ENCODE measurements at regions of chr4 and their contacts with region 1.

Region 1: DNA sequence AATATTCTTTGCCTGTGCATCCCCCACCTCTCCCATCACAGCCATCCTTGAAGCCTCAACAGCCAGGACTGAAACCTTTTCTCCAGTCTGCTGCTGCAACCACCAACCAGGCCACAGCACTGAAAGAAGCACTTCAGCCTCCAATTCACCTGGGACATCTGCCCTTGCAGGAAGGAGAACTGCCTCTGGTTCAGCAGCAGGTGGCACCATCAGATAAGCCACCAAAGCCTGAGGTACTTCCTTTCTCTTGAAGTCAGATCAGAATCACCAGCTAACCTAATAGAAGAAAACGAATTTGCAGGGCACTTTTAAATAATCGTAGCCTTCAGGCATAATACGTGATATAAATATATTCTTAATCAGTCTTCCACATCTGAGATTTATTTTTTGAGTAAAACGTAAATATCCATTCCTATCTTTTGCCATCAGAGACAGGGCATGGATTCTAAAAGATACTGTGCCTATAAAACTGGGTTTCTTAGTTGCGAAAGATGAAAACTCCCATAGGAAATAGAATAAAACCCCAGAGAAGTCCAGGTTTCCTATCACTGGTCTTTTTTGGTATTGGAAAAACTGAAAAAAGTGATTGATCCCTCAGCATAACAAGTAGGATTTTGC is 9.5 kb downstream of the AMBN start:
- DNase-seq: peak; percentile 90
- H3K4me3 ChIP-seq: no peak overlapping the region
- H3K27ac ChIP-seq: no peak overlapping the region
- H3K4me1 ChIP-seq: peaks cover 7% of the 10 kb centered on the region
- CTCF ChIP-seq: peak; percentile 99

Region 2: DNA sequence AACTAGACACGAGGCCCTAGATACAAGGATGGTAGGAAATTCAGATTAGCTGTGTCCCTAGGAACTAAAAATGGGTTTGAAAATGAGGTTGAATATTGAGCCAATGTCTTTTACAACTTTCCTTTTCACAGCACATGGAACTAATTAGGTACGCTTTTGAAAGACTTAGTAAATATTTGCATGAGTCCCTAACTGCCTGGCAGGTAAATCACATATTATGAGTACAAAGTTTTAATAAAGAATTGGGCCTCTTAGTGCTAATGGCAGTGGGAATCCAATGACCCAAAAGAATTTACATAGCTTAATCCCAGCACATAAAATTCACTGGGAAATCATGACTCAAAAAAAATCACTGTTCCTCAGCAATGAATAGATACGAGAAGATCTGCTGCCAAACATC is 112.8 kb before region 1 on chr4:
- CTCF ChIA-PET with region 1: no interaction called
- POLR2A ChIA-PET with region 1: no interaction called
- intact Hi-C with region 1: no loop called
- DNase-seq: no peak
- H3K4me3 ChIP-seq: no peak overlapping the region
- H3K27ac ChIP-seq: no peak overlapping the region
- H3K4me1 ChIP-seq: no peaks in the 10 kb centered on the region
- CTCF ChIP-seq: no peak

Region 3: GRCh38 chr4:70704331-70705145 is 103.0 kb after region 1 on chr4:
- CTCF ChIA-PET with region 1: no interaction called
- POLR2A ChIA-PET with region 1: interaction called, 5 read pairs
- intact Hi-C with region 1: loop called (anchors 2 kb)
- DNase-seq: peak; percentile 85
- H3K4me3 ChIP-seq: peak overlapping the region; percentile 90
- H3K27ac ChIP-seq: peak overlapping the region; percentile 77
- H3K4me1 ChIP-seq: peaks cover 32% of the 10 kb centered on the region
- CTCF ChIP-seq: peak; percentile 71

Region 4: DNA sequence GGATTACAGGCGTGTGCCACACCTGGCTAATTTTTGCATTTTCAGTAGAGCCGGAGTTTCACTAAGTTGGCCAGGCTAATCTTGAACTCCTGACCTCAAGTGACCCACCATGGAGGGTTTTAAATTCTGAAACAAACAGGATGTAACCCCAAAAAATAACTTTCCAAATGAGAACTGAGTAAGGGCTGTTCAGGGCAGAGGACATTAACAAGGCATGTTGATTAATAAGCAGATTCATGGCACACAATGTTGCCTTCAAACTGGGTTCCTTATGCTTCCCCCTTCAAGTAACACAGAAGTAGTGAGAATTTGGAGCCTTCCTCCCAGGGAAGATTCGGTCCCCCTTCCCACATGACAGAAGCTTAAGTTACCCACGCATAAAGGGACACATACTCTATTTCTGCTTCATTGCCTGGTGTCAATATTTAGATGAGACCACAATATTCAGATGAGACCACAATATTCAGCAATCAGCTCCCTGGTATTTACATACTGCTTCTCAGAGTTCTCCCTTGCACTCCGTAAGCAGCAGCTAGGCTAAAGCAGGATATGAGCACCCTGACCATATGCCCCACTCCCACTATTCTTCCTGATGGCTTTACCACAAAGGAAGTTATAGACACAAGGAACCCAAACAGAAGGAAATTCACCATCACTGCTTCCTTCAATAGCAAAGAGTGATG is 216.8 kb after region 1 on chr4:
- CTCF ChIA-PET with region 1: no interaction called
- POLR2A ChIA-PET with region 1: interaction called, 3 read pairs
- intact Hi-C with region 1: loop called (anchors 5 kb)
- DNase-seq: no peak
- H3K4me3 ChIP-seq: no peak overlapping the region
- H3K27ac ChIP-seq: no peak overlapping the region
- H3K4me1 ChIP-seq: peaks cover 4% of the 10 kb centered on the region
- CTCF ChIP-seq: no peak

Region 5: GRCh38 chr4:70839589-70840093 is 238.1 kb after region 1 on chr4 and contains the start of gene GRSF1:
- CTCF ChIA-PET with region 1: no interaction called
- POLR2A ChIA-PET with region 1: no interaction called
- intact Hi-C with region 1: loop called (anchors 1 kb)
- DNase-seq: peak; percentile 97
- H3K4me3 ChIP-seq: peak within 1 kb of the TSS; percentile 73
- H3K27ac ChIP-seq: peak within 1 kb of the TSS; percentile 76
- H3K4me1 ChIP-seq: peaks cover 41% of the 10 kb centered on the region
- CTCF ChIP-seq: peak; percentile 21; the same call in 1 of the 2 replicates
- total RNA-seq, gene GRSF1: 32.8 and 36.7 TPM in 2 replicates

Region 6: DNA sequence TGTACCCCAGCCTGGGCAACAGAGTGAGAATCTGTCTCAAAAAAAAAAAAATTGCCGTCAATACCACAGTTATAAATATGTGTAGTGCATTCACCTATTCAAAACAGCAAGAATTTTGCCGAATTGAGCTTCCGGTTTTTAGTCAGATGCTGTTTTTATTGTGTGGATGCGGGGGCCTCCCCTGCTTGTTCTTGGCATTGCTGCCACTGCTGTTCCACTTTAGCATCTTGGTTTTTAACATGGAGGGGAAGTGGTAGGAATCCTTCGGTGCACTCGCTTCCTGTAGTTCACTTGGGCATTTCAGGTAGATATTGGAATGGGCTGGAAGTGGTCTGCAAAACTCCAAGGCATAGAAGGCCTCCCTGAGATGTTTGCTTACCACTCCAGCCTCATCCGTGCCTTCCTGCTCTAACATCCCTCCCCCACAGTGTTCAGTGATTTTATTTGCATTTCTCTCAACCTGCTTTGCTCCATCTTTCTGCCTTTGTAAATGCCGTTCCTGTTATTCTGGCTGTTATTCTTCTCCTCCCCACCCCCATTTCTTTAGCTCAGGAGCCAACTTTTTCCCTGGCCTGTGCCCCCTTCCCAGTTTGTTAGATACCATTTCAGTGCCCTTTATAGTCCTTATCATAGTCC is 326.1 kb after region 1 on chr4:
- CTCF ChIA-PET with region 1: no interaction called
- POLR2A ChIA-PET with region 1: interaction called, 3 read pairs
- intact Hi-C with region 1: loop called (anchors 5 kb)
- DNase-seq: peak; percentile 81
- H3K4me3 ChIP-seq: peak overlapping the region; percentile 63
- H3K27ac ChIP-seq: peak overlapping the region; percentile 88
- H3K4me1 ChIP-seq: peaks cover 94% of the 10 kb centered on the region
- CTCF ChIP-seq: peak; percentile 48

Region 7: DNA sequence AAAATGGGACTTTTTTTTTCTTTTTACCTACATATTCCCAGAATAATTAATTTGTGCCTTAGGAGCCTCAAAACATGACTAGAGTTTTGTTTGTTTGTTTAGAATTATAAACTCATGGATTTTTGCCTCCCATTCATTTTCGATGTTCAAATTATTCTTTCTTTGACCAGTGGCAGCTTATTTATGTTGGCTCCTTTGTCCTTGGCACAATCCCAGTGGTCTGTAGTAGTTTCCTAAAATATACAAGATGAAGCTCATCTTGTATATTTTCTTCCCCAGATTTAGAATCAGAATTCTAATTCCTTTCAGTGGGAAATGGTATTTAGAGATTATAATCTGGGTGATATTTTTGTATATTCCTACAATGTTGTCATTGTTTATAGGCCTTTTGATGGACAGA is 419.1 kb after region 1 on chr4:
- CTCF ChIA-PET with region 1: no interaction called
- POLR2A ChIA-PET with region 1: no interaction called
- intact Hi-C with region 1: loop called (anchors 5 kb)
- DNase-seq: no peak
- H3K4me3 ChIP-seq: no peak overlapping the region
- H3K27ac ChIP-seq: no peak overlapping the region
- H3K4me1 ChIP-seq: no peaks in the 10 kb centered on the region
- CTCF ChIP-seq: no peak

Region 8: GRCh38 chr4:71553605-71554004 is 952.1 kb after region 1 on chr4:
- CTCF ChIA-PET with region 1: no interaction called
- POLR2A ChIA-PET with region 1: no interaction called
- intact Hi-C with region 1: no loop called
- DNase-seq: peak; percentile 8
- H3K4me3 ChIP-seq: no peak overlapping the region
- H3K27ac ChIP-seq: no peak overlapping the region
- H3K4me1 ChIP-seq: no peaks in the 10 kb centered on the region
- CTCF ChIP-seq: peak; percentile 55

Region 9: GRCh38 chr4:71713611-71714203 is 1112.2 kb after region 1 on chr4:
- CTCF ChIA-PET with region 1: no interaction called
- POLR2A ChIA-PET with region 1: no interaction called
- intact Hi-C with region 1: loop called (anchors 5 kb)
- DNase-seq: peak; percentile 39
- H3K4me3 ChIP-seq: no peak overlapping the region
- H3K27ac ChIP-seq: no peak overlapping the region
- H3K4me1 ChIP-seq: no peaks in the 10 kb centered on the region
- CTCF ChIP-seq: peak; percentile 81

Measured in OCI-LY7 (cell line).